RWPE1 (cell line): ENCODE measurements at regions of chr10 and their contacts with region 1.

Region 1: DNA sequence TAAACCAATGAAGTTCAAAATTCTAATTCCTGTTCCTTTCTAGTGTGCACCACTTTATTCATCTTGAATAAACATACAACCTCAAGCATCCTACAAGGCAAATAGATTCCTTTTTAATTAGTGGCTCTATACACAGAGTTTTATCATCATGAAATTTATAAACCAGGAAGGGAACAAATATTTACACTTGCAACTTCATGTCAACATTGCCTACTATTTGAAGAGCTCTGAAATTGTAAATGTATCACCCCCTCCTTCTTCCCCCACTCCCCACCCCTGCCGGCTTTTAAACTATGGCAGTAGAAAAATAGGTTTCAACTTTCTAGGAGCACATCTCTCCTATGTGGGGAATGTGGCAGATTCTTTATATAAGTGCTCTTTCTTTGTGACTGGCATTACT is 49.6 kb downstream of the KAT6B start:
- DNase-seq: no peak
- H3K27ac ChIP-seq: no peak overlapping the region
- CTCF ChIP-seq: no peak

Region 2: DNA sequence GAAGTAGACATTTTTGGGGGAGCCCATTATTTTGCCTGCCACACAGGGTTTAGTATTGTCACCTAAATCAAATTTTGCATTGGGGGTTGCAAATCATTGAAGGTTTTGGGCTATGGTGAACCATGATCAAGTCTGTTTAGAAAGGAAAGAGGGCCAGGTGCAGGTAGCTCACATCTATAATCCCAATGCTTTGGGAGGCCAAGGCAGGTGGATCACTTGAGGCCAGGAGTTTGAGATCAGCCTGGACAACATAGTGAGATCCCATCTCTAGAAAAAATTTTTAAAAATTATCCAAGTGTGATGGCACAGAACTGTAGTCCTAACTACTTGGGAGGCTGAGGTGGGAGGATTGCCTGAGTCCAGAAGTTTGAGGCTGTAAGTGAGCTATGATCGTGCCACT is 18.4 kb before region 1 on chr10:
- CTCF ChIA-PET with region 1: no interaction called
- POLR2A ChIA-PET with region 1: interaction called, 10 read pairs
- DNase-seq: no peak
- H3K27ac ChIP-seq: no peak overlapping the region
- CTCF ChIP-seq: no peak

Region 3: GRCh38 chr10:74994854-74995253 is 118.9 kb after region 1 on chr10:
- CTCF ChIA-PET with region 1: no interaction called
- POLR2A ChIA-PET with region 1: no interaction called
- DNase-seq: no peak
- H3K27ac ChIP-seq: no peak overlapping the region
- CTCF ChIP-seq: no peak